Activated CD4-positive, alpha-beta T cell treated with anti-CD3 and anti-CD28 coated beads, Interleukin-2, amount 10 ng/mL, durations not matched to agents 24 days and 14 days (primary cell): ENCODE measurements at regions of chr5 and their contacts with region 1.

Region 1: DNA sequence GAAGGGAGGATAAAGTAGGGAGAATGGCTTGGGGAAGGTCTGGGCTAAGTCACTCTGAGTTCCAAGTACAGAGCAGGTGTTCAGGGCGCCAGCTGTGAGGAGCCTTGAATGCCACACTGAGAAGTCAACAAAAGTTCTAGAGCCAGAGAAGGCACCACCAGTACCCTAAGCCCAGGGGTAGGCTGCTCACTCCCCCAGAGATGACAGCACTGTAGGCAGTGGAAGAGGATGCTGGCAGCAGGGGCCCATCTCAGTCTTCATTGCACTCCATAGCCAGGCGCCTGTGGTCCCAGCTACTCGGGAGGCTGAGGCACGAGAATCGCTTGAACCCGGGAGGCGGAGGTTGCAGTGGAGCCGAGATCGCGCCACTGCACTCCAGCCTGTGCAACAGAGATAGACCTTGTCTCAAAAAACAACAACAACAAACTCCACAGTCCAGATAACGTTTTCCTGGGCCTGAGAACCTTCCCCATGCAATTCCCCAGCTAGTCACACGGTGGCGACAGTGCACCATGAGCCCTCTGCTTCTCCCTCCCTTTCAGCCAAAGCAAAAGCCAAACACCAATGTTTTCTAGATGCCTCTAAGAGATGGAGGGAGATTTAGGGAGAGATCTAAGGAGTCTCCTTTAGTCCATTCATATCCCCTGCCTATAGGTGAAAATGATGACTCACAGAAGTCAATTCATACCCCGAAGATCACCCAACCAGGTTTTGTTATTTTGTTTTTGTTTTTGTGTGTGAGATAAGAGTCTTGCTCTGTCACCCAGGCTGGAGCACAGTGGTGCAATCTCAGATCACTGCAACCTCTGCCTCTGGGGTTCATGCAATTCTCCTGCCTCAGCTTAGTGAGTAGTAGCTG is 19.8 kb upstream of the NSD1 start:
- DNase-seq: peak; percentile 94
- H3K4me3 Mint-ChIP-seq: no peak overlapping the region
- H3K27ac Mint-ChIP-seq: no peak overlapping the region
- H3K4me1 Mint-ChIP-seq: peaks cover 19% of the 10 kb centered on the region
- H3K27me3 Mint-ChIP-seq: no peaks in the 10 kb centered on the region

Region 2: DNA sequence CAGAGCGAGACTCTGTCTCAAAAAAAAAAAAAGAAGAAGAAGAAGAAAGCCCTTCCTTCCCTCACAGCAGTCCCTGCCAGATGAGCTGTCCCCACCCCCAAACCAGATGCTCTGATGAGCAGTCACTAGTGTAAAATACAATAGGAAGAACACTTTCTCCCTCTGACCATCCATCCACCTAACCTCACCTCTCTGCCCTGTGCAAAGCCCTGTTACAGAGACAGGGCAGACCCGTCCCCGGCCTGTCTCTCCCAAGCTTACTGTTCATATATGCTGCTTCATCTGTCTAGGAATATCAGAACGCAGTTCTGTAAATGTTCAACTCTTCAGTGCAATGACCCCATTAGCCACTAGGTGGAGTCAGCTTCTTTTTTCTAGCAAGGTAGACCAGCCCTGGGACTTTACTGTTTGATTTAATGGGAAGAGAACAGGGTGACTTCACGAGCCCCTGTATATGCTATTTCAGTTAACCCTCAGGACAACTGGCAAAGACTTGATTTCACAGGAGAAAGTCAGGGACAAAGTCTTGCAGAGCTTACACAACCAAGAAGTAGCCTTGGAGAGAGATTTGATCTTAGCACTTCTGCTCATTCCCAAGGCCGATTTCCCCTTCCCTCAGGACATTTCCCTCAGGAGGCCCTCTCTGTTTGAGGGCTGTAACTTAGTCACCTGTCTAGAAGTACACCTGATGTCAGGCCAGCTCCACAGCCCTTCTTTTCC is 42.0 kb before region 1 on chr5:
- intact Hi-C with region 1: loop called (anchors 2 kb)
- DNase-seq: peak; percentile 92
- H3K4me3 Mint-ChIP-seq: no peak overlapping the region
- H3K27ac Mint-ChIP-seq: no peak overlapping the region
- H3K4me1 Mint-ChIP-seq: peaks cover 3% of the 10 kb centered on the region
- H3K27me3 Mint-ChIP-seq: no peaks in the 10 kb centered on the region

Region 3: GRCh38 chr5:177249761-177250526 is 136.1 kb after region 1 on chr5:
- intact Hi-C with region 1: loop called (anchors 2 kb)
- DNase-seq: no peak
- H3K4me3 Mint-ChIP-seq: no peak overlapping the region
- H3K27ac Mint-ChIP-seq: no peak overlapping the region
- H3K4me1 Mint-ChIP-seq: peaks cover 4% of the 10 kb centered on the region
- H3K27me3 Mint-ChIP-seq: no peaks in the 10 kb centered on the region

Region 4: GRCh38 chr5:177311723-177312648 is 198.2 kb after region 1 on chr5 and contains the start of gene MXD3:
- intact Hi-C with region 1: loop called (anchors 2 kb)
- DNase-seq: peak; percentile 99
- H3K4me3 Mint-ChIP-seq: peak within 1 kb of the TSS; percentile 85
- H3K27ac Mint-ChIP-seq: peak within 1 kb of the TSS; percentile 93
- H3K4me1 Mint-ChIP-seq: peaks cover 31% of the 10 kb centered on the region
- H3K27me3 Mint-ChIP-seq: no peaks in the 10 kb centered on the region
- total RNA-seq, gene MXD3: 9.1 and 11.7 TPM in 2 replicates

Region 5: DNA sequence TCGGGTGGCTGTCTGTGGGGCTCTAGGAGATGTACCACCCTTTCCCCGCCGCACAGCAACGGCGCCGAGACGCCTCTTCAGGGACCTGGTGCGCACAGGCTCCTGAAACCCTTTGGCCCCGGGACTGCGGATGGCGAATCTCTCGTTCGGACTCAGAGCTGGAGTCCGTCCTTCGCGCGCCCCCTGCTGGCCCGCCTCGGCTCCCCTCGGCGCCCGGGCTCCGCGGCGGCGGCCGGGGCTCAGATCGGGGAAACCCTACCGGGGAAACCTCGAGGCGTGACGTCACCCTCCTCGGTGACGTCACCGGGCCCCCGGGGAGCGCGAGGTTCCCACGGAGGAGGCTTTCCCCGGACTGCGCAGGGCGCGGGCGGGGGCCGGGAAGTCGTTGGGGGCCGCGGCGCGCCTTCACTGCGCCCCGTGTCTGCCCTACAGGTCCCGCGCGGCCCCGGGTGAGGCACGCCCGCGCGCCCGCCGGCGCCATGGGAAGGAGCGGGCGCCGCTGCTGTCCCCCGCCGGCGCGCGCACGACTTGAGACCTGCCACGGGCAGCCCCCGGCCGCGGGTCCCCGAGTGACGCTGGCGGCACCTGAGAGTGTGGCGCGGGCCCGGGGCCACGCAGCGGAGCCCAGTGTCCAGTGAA is 340.7 kb after region 1 on chr5:
- intact Hi-C with region 1: loop called (anchors 10 kb)
- DNase-seq: peak; percentile 98
- H3K4me3 Mint-ChIP-seq: peak overlapping the region; percentile 85
- H3K27ac Mint-ChIP-seq: no peak overlapping the region
- H3K4me1 Mint-ChIP-seq: peaks cover 10% of the 10 kb centered on the region
- H3K27me3 Mint-ChIP-seq: peaks cover 18% of the 10 kb centered on the region